Activated naive CD4-positive, alpha-beta T cell treated with anti-CD3 and anti-CD28 coated beads for 36 hours (primary cell): ENCODE measurements at regions of chr7 and their contacts with region 1.

Region 1: GRCh38 chr7:136030862-136031318 is 53.7 kb upstream of the MTPN start:
- DNase-seq: peak; percentile 38
- H3K4me3 Mint-ChIP-seq: no peak overlapping the region
- H3K27ac Mint-ChIP-seq: peak overlapping the region; percentile 80
- H3K4me1 Mint-ChIP-seq: peaks cover 59% of the 10 kb centered on the region
- H3K27me3 Mint-ChIP-seq: peaks cover 13% of the 10 kb centered on the region

Region 2: DNA sequence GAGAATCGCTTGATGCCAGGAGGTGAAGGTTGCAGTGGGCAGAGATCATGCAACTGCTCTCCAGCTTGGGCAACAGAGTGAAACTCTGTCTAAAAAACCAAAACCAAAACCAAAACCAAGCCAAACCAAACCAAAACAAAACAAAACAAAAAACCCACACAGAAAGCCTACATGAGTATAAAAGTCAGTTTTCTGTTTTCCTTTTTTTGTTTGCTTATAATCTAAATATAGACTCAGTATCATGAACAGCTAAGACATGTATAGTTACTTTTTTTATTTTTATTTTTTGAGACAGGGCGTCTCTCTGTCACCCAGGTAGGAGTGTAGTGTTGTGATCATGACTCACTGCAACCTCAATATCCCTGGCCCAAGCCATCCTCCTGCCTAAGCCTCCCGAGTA is 36.9 kb before region 1 on chr7:
- CTCF ChIA-PET with region 1: no interaction called
- intact Hi-C with region 1: loop called (anchors 1 kb)
- DNase-seq: no peak
- H3K4me3 Mint-ChIP-seq: no peak overlapping the region
- H3K27ac Mint-ChIP-seq: no peak overlapping the region
- H3K4me1 Mint-ChIP-seq: peaks cover 17% of the 10 kb centered on the region
- H3K27me3 Mint-ChIP-seq: peaks cover 5% of the 10 kb centered on the region

Region 3: GRCh38 chr7:136016649-136017395 is 14.1 kb before region 1 on chr7:
- CTCF ChIA-PET with region 1: interaction called, 3 read pairs
- intact Hi-C with region 1: loop called (anchors 1 kb)
- DNase-seq: peak; percentile 10
- H3K4me3 Mint-ChIP-seq: no peak overlapping the region
- H3K27ac Mint-ChIP-seq: no peak overlapping the region
- H3K4me1 Mint-ChIP-seq: peaks cover 26% of the 10 kb centered on the region
- H3K27me3 Mint-ChIP-seq: peaks cover 26% of the 10 kb centered on the region

Region 4: GRCh38 chr7:136064081-136064480 is 33.2 kb after region 1 on chr7:
- CTCF ChIA-PET with region 1: interaction called, 3 read pairs
- intact Hi-C with region 1: loop called (anchors 1 kb)
- DNase-seq: peak; percentile 8
- H3K4me3 Mint-ChIP-seq: no peak overlapping the region
- H3K27ac Mint-ChIP-seq: peak overlapping the region; percentile 21
- H3K4me1 Mint-ChIP-seq: peaks cover 13% of the 10 kb centered on the region
- H3K27me3 Mint-ChIP-seq: peaks cover 11% of the 10 kb centered on the region